Heart left ventricle (tissue), 16 donors: ENCODE measurements at regions of chr5 and their contacts with region 1.

Region 1: DNA sequence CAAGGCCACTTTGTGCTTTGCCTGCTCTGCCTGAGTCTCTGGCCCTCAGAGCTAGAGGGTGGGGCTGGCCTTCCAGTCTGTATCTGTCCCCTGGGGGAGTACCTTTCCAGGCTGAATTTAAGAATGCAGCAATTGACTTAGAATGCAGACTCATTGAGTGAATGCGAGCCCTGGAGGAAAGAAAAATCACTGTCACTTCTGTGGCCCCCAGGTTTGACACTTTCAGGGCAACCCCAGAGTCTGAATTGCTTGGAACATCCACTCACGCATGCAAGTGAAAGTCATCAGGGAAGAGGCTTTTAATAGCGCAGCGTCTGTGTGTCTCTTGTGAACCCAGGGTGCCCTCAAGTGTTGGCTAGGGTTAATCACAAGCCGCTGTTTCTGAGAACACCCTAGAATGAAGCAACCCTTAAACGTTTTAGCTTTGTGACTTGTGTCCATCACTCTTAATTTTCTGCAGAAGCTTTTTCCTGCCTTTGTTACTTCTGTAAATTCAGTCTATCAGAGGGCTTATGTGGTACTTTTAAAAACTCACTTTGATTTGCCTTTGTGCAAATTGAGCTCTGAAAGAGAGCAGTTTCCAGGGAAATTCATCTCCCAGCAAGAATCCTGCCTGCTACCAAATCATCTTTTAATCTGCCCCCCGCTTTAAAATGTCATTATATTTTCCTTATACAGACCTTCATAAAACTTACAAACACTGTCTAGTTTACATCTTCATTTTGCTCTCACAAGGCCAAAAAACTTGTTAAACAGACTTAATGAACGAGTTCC is 146.8 kb upstream of the IQGAP2 start:
- DNase-seq: peak in 4 of 5 donors; percentile 48 to 57 (median 51)
- ATAC-seq: peak; percentile 78 to 95 (median 94)
- H3K4me3 ChIP-seq: no peak overlapping the region
- H3K27ac ChIP-seq: no peak overlapping the region
- H3K4me1 ChIP-seq: peaks cover 0 to 7% (median 3%) of the 10 kb centered on the region in 12 donors
- H3K27me3 ChIP-seq: peaks cover 0 to 19% (median 3%) of the 10 kb centered on the region in 9 donors
- CTCF ChIP-seq: peak; percentile 44 to 70 (median 60)
- POLR2A ChIP-seq: no peak

Region 2: GRCh38 chr5:74927336-74927735 is 1329.0 kb before region 1 on chr5:
- intact Hi-C with region 1: loop called in 1 of 10 experiments (anchors 10 kb)
- DNase-seq: no peak
- ATAC-seq: no peak
- H3K4me3 ChIP-seq: no peak overlapping the region
- H3K27ac ChIP-seq: no peak overlapping the region
- H3K4me1 ChIP-seq: no peaks in the 10 kb centered on the region
- H3K27me3 ChIP-seq: peaks cover 0 to 2% (median 0%) of the 10 kb centered on the region in 9 donors
- CTCF ChIP-seq: no peak
- POLR2A ChIP-seq: no peak

Region 3: GRCh38 chr5:75336625-75337339 is 919.5 kb before region 1 on chr5 and contains the start of gene HMGCR:
- intact Hi-C with region 1: no loop called
- DNase-seq: peak; percentile 99 to 100 (median 99)
- ATAC-seq: peak; percentile 99 to 100 (median 100)
- H3K4me3 ChIP-seq: peak within 1 kb of the TSS; percentile 75 to 99 (median 89)
- H3K27ac ChIP-seq: peak within 1 kb of the TSS; percentile 54 to 98 (median 88)
- H3K4me1 ChIP-seq: peaks cover 0 to 28% (median 14%) of the 10 kb centered on the region in 12 donors
- H3K27me3 ChIP-seq: no peaks in the 10 kb centered on the region
- CTCF ChIP-seq: peak in 5 of 12 donors; percentile 19 to 55 (median 35)
- POLR2A ChIP-seq: peak in 1 of 2 donors; percentile 69
- total RNA-seq, gene HMGCR: 6.0 to 15.2 (median 11.9) TPM

Region 4: DNA sequence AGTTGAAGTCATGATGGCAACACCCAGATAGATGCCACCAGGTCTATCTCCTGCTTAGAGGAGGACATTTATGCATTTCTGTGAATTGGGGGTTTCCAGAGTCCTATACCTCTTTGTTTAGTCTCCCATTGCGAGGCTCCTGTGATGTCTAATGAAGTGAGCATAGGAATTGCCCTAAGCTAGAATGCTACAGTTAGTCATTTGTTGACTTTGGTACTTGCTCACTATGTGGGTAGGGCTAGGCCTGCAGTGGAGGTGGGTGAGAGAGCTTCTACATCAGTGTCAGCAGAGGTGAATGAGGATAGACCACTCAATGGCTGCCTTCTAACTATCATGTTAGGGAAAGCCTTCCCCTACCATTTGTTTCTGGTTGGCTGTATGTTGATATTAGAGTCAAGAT is 365.8 kb before region 1 on chr5:
- intact Hi-C with region 1: no loop called
- DNase-seq: no peak
- ATAC-seq: no peak
- H3K4me3 ChIP-seq: no peak overlapping the region
- H3K27ac ChIP-seq: no peak overlapping the region
- H3K4me1 ChIP-seq: no peaks in the 10 kb centered on the region
- H3K27me3 ChIP-seq: no peaks in the 10 kb centered on the region
- CTCF ChIP-seq: no peak
- POLR2A ChIP-seq: no peak